CD14-positive monocyte (primary cell): ENCODE measurements at regions of chr19 and their contacts with region 1.

Region 1: GRCh38 chr19:14271840-14272239 is 65.9 kb upstream of the ADGRL1 start:
- DNase-seq: no peak
- H3K4me3 ChIP-seq: no peak overlapping the region
- H3K4me3 Mint-ChIP-seq: no peak overlapping the region
- H3K27ac ChIP-seq: no peak overlapping the region
- H3K27ac Mint-ChIP-seq: no peak overlapping the region
- H3K4me1 ChIP-seq: peaks cover 0 to 3% of the 10 kb centered on the region in 2 donors
- H3K4me1 Mint-ChIP-seq: peaks cover 9% of the 10 kb centered on the region
- H3K27me3 ChIP-seq: no peaks in the 10 kb centered on the region
- H3K27me3 Mint-ChIP-seq: peaks cover 7 to 9% (median 7%) of the 10 kb centered on the region in 3 donors
- CTCF ChIP-seq: no peak

Region 2: DNA sequence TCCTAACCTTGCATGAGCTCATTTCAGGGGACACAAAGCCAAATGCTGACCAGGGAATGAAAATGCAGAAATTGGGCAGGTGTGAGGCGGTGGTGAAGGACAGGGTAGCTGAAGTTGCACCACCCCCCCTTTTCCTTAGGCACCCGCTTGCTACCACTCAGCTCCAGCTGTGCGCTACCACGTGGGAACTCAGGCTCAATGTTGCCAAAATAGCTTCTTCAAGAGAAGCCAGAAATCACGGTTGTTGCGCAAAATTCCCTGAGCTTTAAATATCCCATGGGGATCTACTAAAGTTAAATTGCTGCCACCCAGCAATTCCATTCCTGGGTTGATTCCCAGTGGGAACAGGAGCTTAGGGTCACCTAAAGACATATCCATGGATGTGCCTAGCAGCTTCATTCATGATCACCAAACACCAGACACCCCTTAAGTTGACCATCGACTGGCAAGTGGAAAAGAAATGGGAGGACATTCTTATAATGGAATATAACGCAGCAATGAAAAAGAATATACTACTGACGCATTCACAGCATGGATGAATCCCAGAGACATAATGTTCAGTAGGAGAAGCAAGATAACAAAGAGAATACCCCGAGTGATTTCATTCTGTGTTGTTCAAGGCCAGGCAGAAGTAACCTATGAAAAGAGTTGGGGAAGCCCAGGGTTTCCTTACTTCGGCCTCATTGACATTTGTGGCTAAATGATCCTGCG is 53.1 kb before region 1 on chr19:
- intact Hi-C with region 1: loop called in 1 of 2 experiments (anchors 10 kb)
- DNase-seq: no peak
- H3K4me3 ChIP-seq: no peak overlapping the region
- H3K4me3 Mint-ChIP-seq: no peak overlapping the region
- H3K27ac ChIP-seq: no peak overlapping the region
- H3K27ac Mint-ChIP-seq: no peak overlapping the region
- H3K4me1 ChIP-seq: peaks cover 10 to 14% of the 10 kb centered on the region in 2 donors
- H3K4me1 Mint-ChIP-seq: peaks cover 25% of the 10 kb centered on the region
- H3K27me3 ChIP-seq: no peaks in the 10 kb centered on the region
- H3K27me3 Mint-ChIP-seq: peaks cover 2 to 12% (median 9%) of the 10 kb centered on the region in 3 donors
- CTCF ChIP-seq: no peak